GM12878 (cell line): ENCODE measurements at regions of chr6 and their contacts with region 1.

Region 1: DNA sequence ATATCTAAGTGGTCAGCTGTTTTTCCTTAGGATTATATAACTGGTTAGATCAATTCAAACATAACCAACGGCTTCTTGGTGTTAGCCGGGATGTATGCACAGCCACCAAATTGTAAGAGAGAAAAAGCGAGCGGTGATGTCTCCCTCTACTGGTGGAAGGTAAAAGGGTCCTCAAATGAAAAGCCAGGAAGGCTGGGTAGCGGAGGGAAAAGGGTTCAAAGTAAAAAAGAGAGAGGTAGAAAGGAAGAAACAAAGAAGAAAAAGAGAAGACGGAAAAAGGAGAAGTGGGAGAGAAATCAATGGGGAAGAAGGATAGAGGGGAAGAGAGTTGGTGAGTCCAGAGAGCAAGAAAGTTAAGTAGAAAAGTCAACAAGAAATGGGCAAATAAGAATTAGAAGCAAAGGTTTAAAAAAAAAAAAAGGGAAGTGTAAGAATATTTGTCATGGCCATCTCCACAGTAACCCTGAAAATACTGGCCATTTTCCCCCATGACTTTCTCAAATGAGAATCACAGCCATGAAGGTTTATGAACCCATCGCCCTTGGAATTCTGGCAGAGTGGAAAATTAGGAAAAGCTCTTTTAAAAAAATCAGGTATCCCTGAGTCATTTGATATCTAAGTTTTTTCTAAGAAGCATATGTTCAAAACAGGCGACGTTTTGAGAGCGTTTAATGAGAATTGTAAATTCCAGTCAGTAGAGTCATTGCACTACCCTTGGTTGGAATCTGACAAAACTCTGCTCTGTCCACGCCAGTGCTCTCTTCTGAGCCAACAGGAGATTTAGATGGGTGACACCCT is 155.6 kb upstream of the SNX9 start:
- DNase-seq: peak; percentile 36
- ATAC-seq: peak; percentile 94
- H3K4me3 ChIP-seq: no peak overlapping the region
- H3K27ac ChIP-seq: no peak overlapping the region
- H3K4me1 ChIP-seq: no peaks in the 10 kb centered on the region
- H3K27me3 ChIP-seq: 0 out of 4 replicates have a peak, but pooled peaks cover 0 to 2% of the 10 kb centered on the region in 2 experiments
- CTCF ChIP-seq: peak; percentile 74 to 81 (median 79)
- EP300 ChIP-seq: no peak
- POLR2A ChIP-seq: no peak
- RAD21 ChIP-seq: peak; percentile 95

Region 2: GRCh38 chr6:157339432-157339831 is 328.0 kb before region 1 on chr6:
- CTCF ChIA-PET with region 1: interaction called, 85 read pairs
- POLR2A ChIA-PET with region 1: interaction called, 3 read pairs
- RAD21 ChIA-PET with region 1: interaction called, 14 read pairs
- SMC1A ChIA-PET with region 1: interaction called, 22 read pairs
- in situ Hi-C with region 1: no loop called
- intact Hi-C with region 1: no loop called
- DNase-seq: no peak
- ATAC-seq: peak; percentile 64
- H3K4me3 ChIP-seq: no peak overlapping the region
- H3K27ac ChIP-seq: no peak overlapping the region
- H3K4me1 ChIP-seq: no peaks in the 10 kb centered on the region
- H3K27me3 ChIP-seq: peaks cover 0 to 2% of the 10 kb centered on the region in 2 experiments; a peak in 1 of 4 replicates
- CTCF ChIP-seq: peak; percentile 14 to 48 (median 20); a peak in 3 of 6 replicates
- EP300 ChIP-seq: no peak
- POLR2A ChIP-seq: no peak
- RAD21 ChIP-seq: peak; percentile 20; the same call in 1 of the 2 replicates

Region 3: GRCh38 chr6:157385482-157385881 is 281.9 kb before region 1 on chr6:
- CTCF ChIA-PET with region 1: interaction called, 14 read pairs
- POLR2A ChIA-PET with region 1: no interaction called
- RAD21 ChIA-PET with region 1: interaction called, 4 read pairs
- SMC1A ChIA-PET with region 1: interaction called, 8 read pairs
- in situ Hi-C with region 1: no loop called
- intact Hi-C with region 1: loop called (anchors 5 kb)
- DNase-seq: peak; percentile 44
- ATAC-seq: peak; percentile 45
- H3K4me3 ChIP-seq: no peak overlapping the region
- H3K27ac ChIP-seq: no peak overlapping the region
- H3K4me1 ChIP-seq: no peaks in the 10 kb centered on the region
- H3K27me3 ChIP-seq: peaks cover 0 to 4% of the 10 kb centered on the region in 2 experiments; a peak in 1 of 4 replicates
- CTCF ChIP-seq: no peak
- EP300 ChIP-seq: peak; percentile 48 to 52; a peak in 2 of 4 replicates
- POLR2A ChIP-seq: no peak
- RAD21 ChIP-seq: no peak

Region 4: DNA sequence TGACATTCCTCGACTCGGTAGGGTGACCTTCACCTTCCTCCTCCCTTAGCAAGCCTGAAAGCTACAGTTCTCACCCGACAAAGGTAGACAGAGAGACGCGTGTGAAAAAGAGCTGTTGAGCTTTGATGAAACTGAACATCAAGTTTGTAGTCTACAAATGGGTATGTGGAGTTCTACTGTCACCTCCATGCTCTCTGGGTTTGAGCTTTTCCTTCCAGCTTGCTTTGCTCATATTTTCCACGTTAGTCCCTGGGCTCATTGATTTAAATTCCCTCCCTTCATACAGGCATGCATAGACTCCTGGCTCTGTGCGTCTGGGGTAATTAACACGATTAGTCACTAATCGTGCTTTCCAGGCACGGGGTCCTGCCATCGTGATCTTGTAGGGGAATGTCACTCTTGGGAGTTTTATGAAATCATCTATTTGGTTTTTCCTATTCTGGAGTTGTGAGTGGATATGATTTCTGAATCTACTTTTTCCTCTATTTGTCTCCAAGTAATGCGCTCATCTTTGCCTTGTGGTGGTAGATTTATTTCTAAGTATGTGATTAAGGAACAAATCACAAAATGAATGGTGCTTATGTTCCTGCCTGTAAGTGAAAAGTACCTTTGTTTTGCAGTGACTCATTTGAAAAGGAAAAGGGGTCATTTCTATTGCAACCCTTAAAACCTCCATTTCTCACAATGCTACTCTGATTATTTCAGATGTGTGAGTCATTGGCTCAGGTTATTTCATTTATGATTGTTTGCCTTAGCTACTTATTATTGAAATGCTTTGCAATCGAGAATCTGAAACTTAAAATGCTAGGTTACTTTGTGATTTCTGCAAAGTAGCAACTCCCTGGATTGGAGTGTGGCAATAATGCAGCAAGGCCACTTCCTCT is 131.8 kb before region 1 on chr6:
- CTCF ChIA-PET with region 1: interaction called, 4 read pairs
- POLR2A ChIA-PET with region 1: no interaction called
- RAD21 ChIA-PET with region 1: no interaction called
- SMC1A ChIA-PET with region 1: interaction called, 11 read pairs
- in situ Hi-C with region 1: no loop called
- intact Hi-C with region 1: no loop called
- DNase-seq: peak; percentile 71
- ATAC-seq: peak; percentile 85
- H3K4me3 ChIP-seq: no peak overlapping the region
- H3K27ac ChIP-seq: no peak overlapping the region; the same call in 1 of the 2 replicates
- H3K4me1 ChIP-seq: peaks cover 8% of the 10 kb centered on the region; the same call in 1 of the 2 replicates
- H3K27me3 ChIP-seq: no peaks in the 10 kb centered on the region
- CTCF ChIP-seq: no peak
- EP300 ChIP-seq: peak; percentile 85 to 91; a peak in 3 of 4 replicates
- POLR2A ChIP-seq: no peak
- RAD21 ChIP-seq: no peak

Region 5: GRCh38 chr6:157656437-157656997 is 10.9 kb before region 1 on chr6:
- CTCF ChIA-PET with region 1: interaction called, 11 read pairs
- POLR2A ChIA-PET with region 1: no interaction called
- RAD21 ChIA-PET with region 1: interaction called, 3 read pairs
- SMC1A ChIA-PET with region 1: no interaction called
- in situ Hi-C with region 1: no loop called
- intact Hi-C with region 1: no loop called
- DNase-seq: no peak
- ATAC-seq: no peak
- H3K4me3 ChIP-seq: no peak overlapping the region
- H3K27ac ChIP-seq: no peak overlapping the region
- H3K4me1 ChIP-seq: no peaks in the 10 kb centered on the region
- H3K27me3 ChIP-seq: no peaks in the 10 kb centered on the region
- CTCF ChIP-seq: no peak
- EP300 ChIP-seq: no peak
- POLR2A ChIP-seq: no peak
- RAD21 ChIP-seq: no peak

Region 6: DNA sequence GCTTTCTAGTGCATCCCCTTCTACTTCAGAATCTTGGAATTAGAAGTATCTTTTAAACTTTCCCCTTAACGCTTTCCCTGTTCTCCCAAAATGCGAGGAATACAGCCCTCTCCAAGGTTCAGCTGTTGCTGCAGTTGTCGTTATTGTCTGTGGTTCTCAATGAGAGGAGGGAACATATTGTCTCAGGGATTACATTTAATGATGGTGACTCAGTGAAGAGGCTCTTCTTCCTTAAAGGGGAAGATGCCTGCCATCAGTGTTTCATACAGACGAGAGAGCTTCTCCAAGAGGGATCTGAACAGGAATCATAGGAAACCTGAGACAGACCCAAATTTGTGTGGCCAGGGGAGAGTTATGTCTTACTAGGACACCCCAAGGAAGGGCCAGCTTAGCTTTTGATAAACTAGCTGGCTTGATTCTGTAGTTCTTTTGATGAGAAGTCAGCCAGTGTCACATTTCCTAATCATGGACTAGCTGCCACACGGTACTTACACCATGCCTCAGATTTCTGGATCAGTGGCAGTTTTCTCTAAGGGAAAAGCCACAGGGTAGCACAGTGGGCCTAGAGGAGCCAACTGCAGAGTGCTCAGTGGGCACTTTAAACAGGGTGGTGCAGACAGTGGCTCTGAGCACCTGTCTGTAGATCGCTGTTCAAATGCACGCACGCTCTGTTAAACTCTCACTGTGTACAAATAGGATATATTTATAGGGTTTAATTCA is 832.8 kb after region 1 on chr6:
- CTCF ChIA-PET with region 1: no interaction called
- POLR2A ChIA-PET with region 1: no interaction called
- RAD21 ChIA-PET with region 1: no interaction called
- SMC1A ChIA-PET with region 1: no interaction called
- in situ Hi-C with region 1: no loop called
- intact Hi-C with region 1: no loop called
- DNase-seq: no peak
- ATAC-seq: no peak
- H3K4me3 ChIP-seq: no peak overlapping the region
- H3K27ac ChIP-seq: no peak overlapping the region
- H3K4me1 ChIP-seq: no peaks in the 10 kb centered on the region
- H3K27me3 ChIP-seq: no peaks in the 10 kb centered on the region
- CTCF ChIP-seq: no peak
- EP300 ChIP-seq: no peak
- POLR2A ChIP-seq: no peak
- RAD21 ChIP-seq: no peak